ENCODE measurements at regions of chr5 and their contacts with region 1.

Region 1: GRCh38 chr5:9544502-9545135 is 1.3 kb downstream of the SEMA5A start:
- DNase-seq: peak; percentile 73 to 91 (median 82)
- H3K4me3 ChIP-seq: peak overlapping the region; percentile 56 to 84 (median 75)
- H3K27ac ChIP-seq: peak overlapping the region in 39 of 59 donors; percentile 2 to 93 (median 62)
- H3K27me3 ChIP-seq: peaks cover 0 to 5% (median 0%) of the 10 kb centered on the region in 45 donors
- CTCF ChIP-seq: peak; percentile 77 to 97 (median 88)

Region 2: GRCh38 chr5:9207817-9208418 is 336.7 kb before region 1 on chr5:
- intact Hi-C with region 1: loop called in 1 of 2 experiments (anchors 10 kb)
- DNase-seq: no peak
- H3K4me3 ChIP-seq: no peak overlapping the region
- H3K27ac ChIP-seq: peak overlapping the region in 1 of 59 donors; percentile 53
- H3K27me3 ChIP-seq: no peaks in the 10 kb centered on the region
- CTCF ChIP-seq: peak; percentile 50 to 90 (median 72)

Region 3: GRCh38 chr5:9284781-9285307 is 259.8 kb before region 1 on chr5:
- intact Hi-C with region 1: loop called (anchors 5 to 10 kb)
- DNase-seq: no peak
- H3K4me3 ChIP-seq: no peak overlapping the region
- H3K27ac ChIP-seq: peak overlapping the region in 18 of 59 donors; percentile 1 to 57 (median 30)
- H3K27me3 ChIP-seq: no peaks in the 10 kb centered on the region
- CTCF ChIP-seq: no peak

Region 4: DNA sequence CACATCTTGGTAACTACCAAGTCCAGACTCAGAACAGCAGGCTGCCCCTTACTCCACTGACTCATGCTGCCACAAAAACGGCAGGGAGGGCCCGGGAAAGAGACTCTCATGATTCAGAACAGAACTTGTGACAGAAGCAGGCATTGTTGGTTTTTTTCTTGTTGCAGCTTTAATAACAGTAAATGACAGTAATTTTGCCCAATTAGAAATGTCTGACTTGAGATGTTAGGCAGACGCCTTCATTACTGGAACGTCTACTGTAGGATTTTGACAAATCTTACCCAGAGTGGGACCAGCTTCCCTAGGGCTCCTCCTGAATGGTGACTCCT is 76.6 kb before region 1 on chr5:
- intact Hi-C with region 1: loop called in 1 of 2 experiments (anchors 5 kb)
- DNase-seq: no peak
- H3K4me3 ChIP-seq: no peak overlapping the region
- H3K27ac ChIP-seq: peak overlapping the region in 11 of 59 donors; percentile 2 to 59 (median 30)
- H3K27me3 ChIP-seq: no peaks in the 10 kb centered on the region
- CTCF ChIP-seq: no peak

Region 5: GRCh38 chr5:10233505-10233904 is 688.9 kb after region 1 on chr5:
- intact Hi-C with region 1: loop called in 1 of 2 experiments (anchors 10 kb)
- DNase-seq: peak in 8 of 10 donors; percentile 51 to 65 (median 61)
- H3K4me3 ChIP-seq: no peak overlapping the region
- H3K27ac ChIP-seq: no peak overlapping the region
- H3K27me3 ChIP-seq: no peaks in the 10 kb centered on the region
- CTCF ChIP-seq: peak in 46 of 56 donors; percentile 6 to 66 (median 35)

Measured in dorsolateral prefrontal cortex (tissue), 120 donors.